ENCODE measurements at regions of chr10 and their contacts with region 1.

Region 1: DNA sequence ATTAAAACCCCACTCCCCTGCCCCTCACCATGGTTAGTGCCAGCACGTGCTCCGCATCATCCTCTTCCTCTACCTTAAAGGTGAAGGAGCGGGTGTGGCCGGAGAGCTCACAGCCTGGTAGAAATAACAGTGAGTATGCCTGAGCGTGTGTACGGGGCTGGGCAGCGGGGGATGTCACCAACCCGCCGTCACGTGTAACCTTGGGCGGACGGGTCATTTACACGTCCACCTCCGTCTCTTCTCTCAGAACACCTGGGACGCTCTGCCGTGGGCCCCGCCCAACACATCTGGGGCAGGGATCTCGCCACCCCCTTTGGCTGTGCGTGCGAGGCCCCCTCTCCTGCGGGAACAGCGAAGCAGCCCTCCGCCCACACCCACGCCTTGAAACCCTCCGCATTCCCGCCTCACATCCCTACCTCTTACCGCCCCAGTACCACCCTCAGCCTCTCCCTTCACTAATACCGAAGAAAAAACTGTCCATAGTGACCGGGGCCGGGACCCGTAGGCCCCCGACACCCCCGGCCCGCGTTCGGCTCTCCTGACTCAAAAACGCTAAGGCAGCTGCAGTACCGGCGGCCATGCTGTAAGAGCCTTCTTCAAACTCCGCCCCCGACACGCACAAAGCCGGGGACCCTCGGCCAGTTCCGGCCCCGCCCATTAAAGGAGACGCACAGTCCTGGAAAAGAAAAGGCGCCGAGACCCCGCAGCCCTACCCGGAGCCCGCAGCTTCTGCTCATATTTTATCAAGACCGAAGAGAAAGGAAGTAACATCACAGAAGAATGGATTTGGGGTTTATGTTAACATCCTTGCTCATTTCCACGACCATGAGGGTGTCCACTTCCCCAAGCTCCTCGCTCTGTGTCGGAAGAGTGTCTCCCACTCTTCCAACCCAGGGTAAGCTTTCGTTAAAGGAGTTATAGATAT is at the start of gene NPM3:
- DNase-seq: peak; percentile 81 to 94
- ATAC-seq: peak; percentile 64 to 81
- H3K4me3 ChIP-seq: peak within 1 kb of the TSS; percentile 72
- H3K27ac ChIP-seq: peak within 1 kb of the TSS; percentile 84 to 93
- H3K4me1 ChIP-seq: peaks cover 32% of the 10 kb centered on the region
- CTCF ChIP-seq: no peak
- EP300 ChIP-seq: no peak
- POLR2A ChIP-seq: peak; percentile 51
- RAD21 ChIP-seq: no peak
- polyA plus RNA-seq, gene NPM3: 41.5 and 45.0 TPM in 2 replicates

Region 2: GRCh38 chr10:100890673-100891317 is 892.3 kb before region 1 on chr10:
- CTCF ChIA-PET with region 1: no interaction called
- POLR2A ChIA-PET with region 1: no interaction called
- DNase-seq: peak; percentile 74 to 75
- ATAC-seq: peak; percentile 88 to 93
- H3K4me3 ChIP-seq: no peak overlapping the region
- H3K27ac ChIP-seq: peak overlapping the region; percentile 70 to 85
- H3K4me1 ChIP-seq: peaks cover 24% of the 10 kb centered on the region
- CTCF ChIP-seq: no peak
- EP300 ChIP-seq: peak in 1 of 2 experiments; percentile 16; a peak in 1 of 5 replicates
- POLR2A ChIP-seq: no peak
- RAD21 ChIP-seq: no peak

Region 3: DNA sequence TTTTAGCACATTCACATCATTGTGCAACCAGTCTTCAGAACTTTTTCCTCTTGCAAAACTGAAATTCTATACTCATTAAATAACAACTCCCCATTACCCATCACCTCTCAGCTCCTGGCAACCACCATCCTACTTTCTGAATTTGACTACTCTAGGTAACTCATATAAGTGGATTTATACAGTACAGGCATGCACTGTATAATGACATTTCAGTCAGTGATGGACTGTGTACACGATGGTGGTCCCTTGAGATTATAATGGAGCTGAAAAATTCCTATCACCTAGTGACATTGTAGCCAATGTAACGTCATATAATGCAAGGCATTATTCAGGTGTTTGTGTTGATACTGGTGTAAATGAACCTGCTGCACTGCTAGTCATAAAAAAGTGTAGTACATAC is 369.0 kb before region 1 on chr10:
- CTCF ChIA-PET with region 1: no interaction called
- POLR2A ChIA-PET with region 1: no interaction called
- DNase-seq: no peak
- ATAC-seq: no peak
- H3K4me3 ChIP-seq: no peak overlapping the region
- H3K27ac ChIP-seq: no peak overlapping the region
- H3K4me1 ChIP-seq: no peaks in the 10 kb centered on the region
- CTCF ChIP-seq: no peak
- EP300 ChIP-seq: no peak
- POLR2A ChIP-seq: no peak
- RAD21 ChIP-seq: no peak

Region 4: DNA sequence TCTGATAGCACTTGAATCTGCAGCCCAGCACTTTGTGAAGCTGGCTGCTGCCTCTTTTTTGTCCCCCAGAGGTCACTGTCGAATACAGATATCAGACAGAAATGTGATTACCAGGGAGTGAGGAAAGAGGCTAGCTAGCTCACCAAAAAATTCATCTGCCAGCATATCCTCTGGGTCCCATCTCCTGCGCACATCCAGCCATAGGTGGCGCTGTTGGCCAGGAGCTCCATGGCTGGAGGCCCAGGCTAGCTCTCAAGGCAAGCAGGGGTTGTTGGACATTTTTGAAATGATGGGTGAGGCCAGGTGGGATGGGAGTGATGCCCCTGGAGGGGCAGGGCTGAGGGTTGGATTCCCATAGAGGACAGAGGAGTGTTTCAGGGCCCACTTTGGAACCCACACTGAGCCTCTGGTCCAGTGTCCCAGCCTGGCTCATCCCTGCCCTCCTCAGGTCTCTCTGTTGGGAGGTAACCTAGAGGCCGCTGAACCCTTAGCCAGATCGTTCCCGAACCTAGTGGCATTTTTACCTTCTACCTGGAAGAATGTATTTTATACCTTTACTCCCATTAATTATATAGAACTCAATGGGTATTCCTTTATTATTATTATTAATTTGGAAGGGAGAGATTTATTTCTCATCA is 180.2 kb before region 1 on chr10:
- CTCF ChIA-PET with region 1: interaction called, 106 read pairs
- POLR2A ChIA-PET with region 1: no interaction called
- DNase-seq: peak; percentile 79 to 86
- ATAC-seq: peak; percentile 88 to 98
- H3K4me3 ChIP-seq: no peak overlapping the region
- H3K27ac ChIP-seq: no peak overlapping the region
- H3K4me1 ChIP-seq: no peaks in the 10 kb centered on the region
- CTCF ChIP-seq: peak; percentile 78
- EP300 ChIP-seq: no peak
- POLR2A ChIP-seq: no peak
- RAD21 ChIP-seq: peak; percentile 72 to 76

Region 5: DNA sequence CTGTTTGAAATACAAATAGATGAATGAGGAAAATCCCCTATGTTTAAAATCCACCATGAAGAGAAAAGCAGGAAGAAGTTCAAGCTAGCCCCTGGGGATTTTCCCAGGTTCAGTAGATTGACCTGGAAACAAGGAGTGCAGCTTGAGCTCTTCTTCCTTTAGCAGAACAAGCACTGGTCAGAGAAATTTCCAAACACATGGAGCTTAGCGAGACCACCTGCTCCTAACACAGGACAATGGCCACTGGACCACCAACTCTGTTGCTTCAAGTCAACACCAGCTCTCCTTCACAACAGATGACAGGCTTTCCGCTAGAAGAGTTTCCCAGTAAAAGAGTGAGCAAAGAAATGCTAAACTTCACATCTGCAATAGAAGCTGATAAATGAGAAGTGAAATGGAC is 78.7 kb before region 1 on chr10:
- CTCF ChIA-PET with region 1: interaction called, 12 read pairs
- POLR2A ChIA-PET with region 1: no interaction called
- DNase-seq: no peak
- ATAC-seq: no peak
- H3K4me3 ChIP-seq: no peak overlapping the region
- H3K27ac ChIP-seq: no peak overlapping the region
- H3K4me1 ChIP-seq: 0 out of 3 replicates have a peak, but pooled peaks cover 3% of the 10 kb centered on the region
- CTCF ChIP-seq: no peak
- EP300 ChIP-seq: no peak
- POLR2A ChIP-seq: no peak
- RAD21 ChIP-seq: no peak

Region 6: GRCh38 chr10:101797403-101798059 is 14.5 kb after region 1 on chr10:
- CTCF ChIA-PET with region 1: interaction called, 82 read pairs
- POLR2A ChIA-PET with region 1: interaction called, 3 read pairs
- DNase-seq: no peak
- ATAC-seq: no peak
- H3K4me3 ChIP-seq: no peak overlapping the region
- H3K27ac ChIP-seq: no peak overlapping the region
- H3K4me1 ChIP-seq: no peaks in the 10 kb centered on the region
- CTCF ChIP-seq: no peak
- EP300 ChIP-seq: no peak
- POLR2A ChIP-seq: no peak
- RAD21 ChIP-seq: no peak

Region 7: DNA sequence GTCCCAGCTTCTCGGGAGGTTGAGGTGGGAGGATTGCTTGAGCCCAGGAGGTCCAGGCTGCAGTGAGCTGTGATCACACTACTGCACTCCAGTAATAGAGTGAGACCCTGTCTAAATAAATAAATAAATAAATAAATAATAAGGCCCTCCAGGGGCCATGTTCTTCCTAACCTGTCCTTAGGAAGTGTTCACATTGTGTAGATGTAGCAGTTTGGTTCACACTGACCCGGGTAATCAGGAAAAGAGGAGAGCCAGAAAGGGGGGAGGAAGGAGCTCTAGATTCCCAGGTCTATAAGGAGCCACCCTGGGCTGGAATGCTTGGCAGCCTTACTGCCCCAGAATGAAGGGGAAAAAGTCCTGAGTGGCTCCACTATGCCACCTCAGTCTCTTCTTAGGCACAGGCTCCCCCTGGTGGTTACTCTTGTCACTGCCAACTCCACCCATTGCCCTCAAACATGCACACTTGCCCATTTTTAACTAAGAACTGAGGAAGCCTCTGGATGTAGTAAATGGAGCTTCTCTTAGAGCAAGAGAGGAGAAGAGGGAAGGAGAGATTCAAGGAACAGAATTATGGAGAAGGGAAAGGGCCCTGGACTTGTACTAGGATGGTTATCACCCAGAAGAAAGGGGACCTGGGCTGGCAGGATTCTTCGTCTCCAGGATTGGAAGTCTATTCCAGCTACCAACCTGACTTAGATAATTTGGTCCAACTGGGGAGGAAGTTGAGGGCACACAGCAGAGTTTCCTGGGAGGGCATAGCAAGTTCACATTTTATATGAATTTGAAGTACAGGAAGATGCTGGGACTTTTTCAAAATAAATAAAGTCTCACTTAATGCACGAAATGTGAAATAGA is 289.8 kb after region 1 on chr10:
- CTCF ChIA-PET with region 1: interaction called, 11 read pairs
- POLR2A ChIA-PET with region 1: no interaction called
- DNase-seq: peak; percentile 81 to 82
- ATAC-seq: peak; percentile 91 to 96
- H3K4me3 ChIP-seq: no peak overlapping the region
- H3K27ac ChIP-seq: no peak overlapping the region
- H3K4me1 ChIP-seq: 0 out of 3 replicates have a peak, but pooled peaks cover 2% of the 10 kb centered on the region
- CTCF ChIP-seq: peak; percentile 89
- EP300 ChIP-seq: no peak
- POLR2A ChIP-seq: no peak
- RAD21 ChIP-seq: peak; percentile 82 to 86